Esophagus squamous epithelium (tissue), 5 donors: ENCODE measurements at regions of chr15 and their contacts with region 1.

Region 1: DNA sequence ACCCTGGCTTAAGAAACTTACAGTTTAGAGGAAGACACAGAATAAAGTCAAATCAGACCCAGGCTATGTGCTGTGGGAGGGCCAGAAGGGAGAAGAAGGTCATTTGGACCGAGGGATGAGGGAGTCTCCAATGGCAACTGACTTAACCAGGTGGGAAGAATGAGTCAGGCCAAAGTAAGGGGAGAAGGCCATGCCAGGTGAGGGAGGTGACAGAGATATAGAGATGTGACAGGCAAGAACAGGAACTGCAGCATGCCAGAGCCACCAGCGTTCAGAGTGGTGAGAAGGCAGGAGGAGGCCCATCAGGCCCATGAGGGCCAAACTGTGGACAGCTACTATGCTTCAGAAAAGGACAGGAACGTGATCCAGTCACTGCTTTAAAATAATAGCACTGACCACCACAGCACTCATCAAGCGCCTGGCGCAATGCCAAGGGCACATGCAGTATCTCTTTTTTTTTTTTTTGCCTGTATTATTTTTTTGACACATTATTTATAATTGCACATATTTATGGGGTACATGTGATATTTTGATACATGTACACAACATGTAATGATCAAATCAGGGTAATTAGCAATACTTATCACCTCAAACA is 154.3 kb upstream of the IGF1R start:
- DNase-seq: no peak
- H3K4me3 ChIP-seq: no peak overlapping the region
- H3K27ac ChIP-seq: no peak overlapping the region
- H3K4me1 ChIP-seq: no peaks in the 10 kb centered on the region
- H3K27me3 ChIP-seq: no peaks in the 10 kb centered on the region
- CTCF ChIP-seq: no peak
- POLR2A ChIP-seq: no peak

Region 2: GRCh38 chr15:98433346-98433745 is 60.7 kb before region 1 on chr15:
- intact Hi-C with region 1: loop called (anchors 10 kb)
- DNase-seq: no peak
- H3K4me3 ChIP-seq: no peak overlapping the region
- H3K27ac ChIP-seq: no peak overlapping the region
- H3K4me1 ChIP-seq: peaks cover 0 to 5% (median 4%) of the 10 kb centered on the region in 3 donors
- H3K27me3 ChIP-seq: peaks cover 0 to 37% (median 0%) of the 10 kb centered on the region in 4 donors
- CTCF ChIP-seq: no peak
- POLR2A ChIP-seq: no peak